Activated B cell treated with CpG ODN at 0.5 μM for 24 hours (primary cell): ENCODE measurements at regions of chr12 and their contacts with region 1.

Region 1: GRCh38 chr12:47705566-47706425 is at the start of gene RPAP3:
- DNase-seq: peak; percentile 96
- ATAC-seq: peak; percentile 90
- H3K4me3 Mint-ChIP-seq: peak within 1 kb of the TSS; percentile 97
- H3K27ac Mint-ChIP-seq: peak within 1 kb of the TSS; percentile 98
- H3K4me1 Mint-ChIP-seq: peaks cover 76% of the 10 kb centered on the region
- H3K27me3 Mint-ChIP-seq: no peaks in the 10 kb centered on the region
- CTCF ChIP-seq: no peak
- total RNA-seq, gene RPAP3: 58.4 and 60.5 TPM in 2 replicates

Region 2: DNA sequence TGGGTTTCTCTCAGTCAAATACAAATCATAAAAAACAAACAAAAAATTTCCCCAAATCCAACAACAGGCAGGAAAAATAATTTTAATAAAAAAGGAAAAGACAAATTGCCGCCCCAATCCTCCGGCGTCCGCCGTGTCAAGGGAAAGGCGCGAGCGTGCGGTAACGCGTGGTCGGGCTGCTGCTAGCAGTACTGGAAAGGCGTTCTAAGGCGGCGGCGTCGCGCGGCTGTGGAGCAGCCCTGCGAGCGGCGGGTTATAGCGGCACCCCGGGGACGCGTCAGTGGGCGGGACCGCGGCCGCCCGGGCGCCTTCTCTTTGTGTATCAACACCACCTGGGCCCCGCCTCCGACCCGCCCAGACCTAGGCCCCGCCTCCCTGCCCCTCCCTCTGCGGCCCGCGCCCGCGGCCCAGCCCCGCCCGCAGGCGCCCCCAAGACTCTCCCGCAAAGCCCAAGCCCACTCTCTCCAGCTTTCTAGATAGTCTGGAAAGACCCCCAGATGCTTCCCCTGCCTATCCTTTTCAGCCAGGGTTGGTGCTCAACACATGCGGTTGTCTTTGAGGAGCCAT is 1333.2 kb before region 1 on chr12 and contains the start of gene SLC38A2:
- CTCF ChIA-PET with region 1: no interaction called
- POLR2A ChIA-PET with region 1: no interaction called
- intact Hi-C with region 1: loop called (anchors 5 kb)
- DNase-seq: peak; percentile 97
- ATAC-seq: peak; percentile 88
- H3K4me3 Mint-ChIP-seq: peak within 1 kb of the TSS; percentile 96
- H3K27ac Mint-ChIP-seq: peak within 1 kb of the TSS; percentile 99
- H3K4me1 Mint-ChIP-seq: peaks cover 46% of the 10 kb centered on the region
- H3K27me3 Mint-ChIP-seq: no peaks in the 10 kb centered on the region
- CTCF ChIP-seq: no peak
- total RNA-seq, gene SLC38A2: 231 and 247 TPM in 2 replicates

Region 3: DNA sequence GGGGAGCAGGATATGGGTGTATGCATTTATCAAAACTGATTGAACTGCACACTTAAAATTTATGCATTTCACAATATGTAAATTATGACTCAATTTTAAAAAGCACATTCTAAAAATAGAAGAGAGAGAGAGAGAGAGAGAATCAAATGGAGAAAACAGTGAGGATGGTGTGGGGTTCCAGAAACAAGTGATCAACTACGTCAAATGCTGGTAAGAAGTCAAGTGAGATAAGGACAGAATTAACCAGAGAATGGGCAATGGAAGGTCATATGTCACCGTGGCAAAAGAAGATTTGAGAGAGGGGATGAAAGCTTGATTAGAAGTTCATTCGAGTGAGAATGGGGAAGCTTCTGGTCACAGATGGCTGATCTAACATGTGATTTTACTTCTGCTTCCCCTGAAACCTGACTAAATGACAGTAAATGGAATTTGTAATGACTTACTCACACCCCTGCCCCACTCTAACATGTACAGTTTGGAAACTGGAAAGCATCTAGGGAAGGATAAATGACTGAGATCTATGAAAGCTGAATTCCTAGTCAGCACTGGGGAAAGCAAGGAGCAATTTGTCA is 349.6 kb before region 1 on chr12:
- CTCF ChIA-PET with region 1: no interaction called
- POLR2A ChIA-PET with region 1: no interaction called
- intact Hi-C with region 1: loop called (anchors 1 kb)
- DNase-seq: no peak
- ATAC-seq: peak; percentile 77
- H3K4me3 Mint-ChIP-seq: peak overlapping the region; percentile 51
- H3K27ac Mint-ChIP-seq: peak overlapping the region; percentile 97
- H3K4me1 Mint-ChIP-seq: peaks cover 85% of the 10 kb centered on the region
- H3K27me3 Mint-ChIP-seq: no peaks in the 10 kb centered on the region
- CTCF ChIP-seq: no peak

Region 4: GRCh38 chr12:47767216-47767724 is 61.5 kb after region 1 on chr12:
- CTCF ChIA-PET with region 1: interaction called, 16 read pairs
- POLR2A ChIA-PET with region 1: interaction called, 13 read pairs
- intact Hi-C with region 1: no loop called
- DNase-seq: peak; percentile 52
- ATAC-seq: peak; percentile 84
- H3K4me3 Mint-ChIP-seq: no peak overlapping the region
- H3K27ac Mint-ChIP-seq: no peak overlapping the region
- H3K4me1 Mint-ChIP-seq: peaks cover 9% of the 10 kb centered on the region
- H3K27me3 Mint-ChIP-seq: no peaks in the 10 kb centered on the region
- CTCF ChIP-seq: no peak

Region 5: DNA sequence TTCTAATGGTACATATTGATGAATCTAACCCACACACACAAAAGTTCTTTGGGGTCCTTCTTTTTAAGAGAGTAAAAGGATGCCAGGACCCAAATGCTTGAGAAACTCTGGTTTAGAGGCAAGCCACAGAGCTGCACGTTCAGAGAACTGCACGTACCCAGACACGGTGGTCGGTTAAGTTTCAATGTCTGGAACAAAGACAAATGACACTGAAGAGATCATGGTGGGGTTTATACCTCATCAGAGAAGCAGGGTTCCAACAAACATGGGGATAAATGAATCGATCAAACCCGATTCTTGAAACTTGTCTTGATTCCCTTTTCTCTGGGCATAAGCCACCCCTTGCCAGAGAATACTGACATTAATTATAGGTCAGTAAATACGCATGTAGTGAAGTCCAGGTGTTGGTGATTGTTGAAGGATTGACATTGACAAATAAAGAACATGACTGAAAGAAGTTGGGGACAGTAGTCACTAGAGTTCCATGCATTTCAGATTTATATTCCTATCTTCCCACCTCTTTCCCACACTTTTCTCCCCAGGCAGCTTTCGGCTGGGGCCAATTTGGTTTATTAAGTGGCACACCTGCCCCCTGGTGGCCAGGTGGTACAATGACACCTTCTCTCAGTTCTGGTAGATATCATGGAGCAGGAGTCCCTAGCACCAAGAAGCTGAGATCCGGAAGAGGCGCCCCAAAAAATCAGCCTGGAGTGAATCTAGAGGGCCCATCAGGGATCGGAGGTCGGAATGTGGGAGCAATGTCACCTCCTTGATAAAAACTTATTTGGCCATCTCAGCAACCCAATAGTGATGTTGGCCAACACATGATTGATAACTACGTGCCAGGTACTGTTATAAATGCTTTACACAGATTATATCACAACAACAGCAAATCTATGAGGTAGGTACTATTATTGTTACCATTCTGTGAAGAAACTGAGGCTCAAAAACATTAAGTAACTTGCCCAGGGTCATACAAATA is 131.7 kb after region 1 on chr12:
- CTCF ChIA-PET with region 1: interaction called, 16 read pairs
- POLR2A ChIA-PET with region 1: interaction called, 5 read pairs
- intact Hi-C with region 1: no loop called
- DNase-seq: peak; percentile 53
- ATAC-seq: peak; percentile 52
- H3K4me3 Mint-ChIP-seq: peak overlapping the region; percentile 25
- H3K27ac Mint-ChIP-seq: peak overlapping the region; percentile 36
- H3K4me1 Mint-ChIP-seq: peaks cover 58% of the 10 kb centered on the region
- H3K27me3 Mint-ChIP-seq: no peaks in the 10 kb centered on the region
- CTCF ChIP-seq: no peak

Region 6: DNA sequence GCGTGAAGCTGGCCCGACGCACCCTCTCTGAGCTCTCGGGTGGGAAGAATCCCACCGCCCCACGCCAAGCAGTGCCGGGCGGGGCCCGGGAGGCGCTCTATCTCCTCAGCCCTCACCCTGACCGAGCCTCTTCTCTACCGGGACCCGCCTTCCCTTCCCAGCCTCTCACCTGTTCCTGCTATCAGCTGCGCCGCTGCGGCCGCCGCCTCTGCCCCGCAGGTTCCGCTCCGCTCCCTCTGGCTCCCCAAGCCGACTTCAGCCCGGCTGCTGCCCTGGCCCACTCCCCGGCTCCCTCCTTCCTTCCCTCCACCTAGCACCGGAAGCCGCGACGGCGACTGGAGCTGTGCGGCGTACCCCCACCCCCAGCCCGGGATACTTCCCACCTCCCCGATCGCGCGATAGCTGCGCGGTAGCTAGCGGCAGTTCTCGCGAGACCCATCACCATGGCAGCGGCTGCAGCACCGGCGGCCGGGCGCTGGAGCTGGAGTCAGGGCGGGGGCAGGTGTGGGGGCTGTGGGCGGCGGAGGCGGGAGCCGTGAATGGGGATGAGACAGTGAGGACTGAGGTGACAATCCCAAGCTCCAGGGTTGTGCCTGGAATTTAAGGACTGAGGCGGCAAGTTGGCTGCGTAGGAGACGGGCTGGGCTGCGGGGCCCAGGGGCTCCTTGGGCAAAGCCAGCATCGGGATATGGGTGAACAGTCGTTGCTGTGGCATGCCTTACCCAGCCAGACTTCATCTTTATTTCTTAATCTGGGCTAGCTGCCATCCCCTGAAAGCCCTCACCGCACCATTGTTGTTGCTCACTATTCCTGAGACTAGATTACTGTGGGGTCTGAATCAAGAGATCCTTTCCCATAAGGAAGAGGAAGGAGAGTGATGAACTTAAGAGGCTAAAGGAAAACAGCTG is 1251.6 kb after region 1 on chr12 and contains the start of gene ARF3:
- CTCF ChIA-PET with region 1: no interaction called
- POLR2A ChIA-PET with region 1: no interaction called
- intact Hi-C with region 1: no loop called
- DNase-seq: peak; percentile 88
- ATAC-seq: peak; percentile 95
- H3K4me3 Mint-ChIP-seq: peak within 1 kb of the TSS; percentile 99
- H3K27ac Mint-ChIP-seq: peak within 1 kb of the TSS; percentile 91
- H3K4me1 Mint-ChIP-seq: peaks cover 41% of the 10 kb centered on the region
- H3K27me3 Mint-ChIP-seq: peaks cover 8% of the 10 kb centered on the region
- CTCF ChIP-seq: no peak
- total RNA-seq, gene ARF3: 113 and 119 TPM in 2 replicates